Activated CD4-positive, alpha-beta memory T cell treated with anti-CD3 and anti-CD28 coated beads for 36 hours (primary cell): ENCODE measurements at regions of chr16 and their contacts with region 1.

Region 1: DNA sequence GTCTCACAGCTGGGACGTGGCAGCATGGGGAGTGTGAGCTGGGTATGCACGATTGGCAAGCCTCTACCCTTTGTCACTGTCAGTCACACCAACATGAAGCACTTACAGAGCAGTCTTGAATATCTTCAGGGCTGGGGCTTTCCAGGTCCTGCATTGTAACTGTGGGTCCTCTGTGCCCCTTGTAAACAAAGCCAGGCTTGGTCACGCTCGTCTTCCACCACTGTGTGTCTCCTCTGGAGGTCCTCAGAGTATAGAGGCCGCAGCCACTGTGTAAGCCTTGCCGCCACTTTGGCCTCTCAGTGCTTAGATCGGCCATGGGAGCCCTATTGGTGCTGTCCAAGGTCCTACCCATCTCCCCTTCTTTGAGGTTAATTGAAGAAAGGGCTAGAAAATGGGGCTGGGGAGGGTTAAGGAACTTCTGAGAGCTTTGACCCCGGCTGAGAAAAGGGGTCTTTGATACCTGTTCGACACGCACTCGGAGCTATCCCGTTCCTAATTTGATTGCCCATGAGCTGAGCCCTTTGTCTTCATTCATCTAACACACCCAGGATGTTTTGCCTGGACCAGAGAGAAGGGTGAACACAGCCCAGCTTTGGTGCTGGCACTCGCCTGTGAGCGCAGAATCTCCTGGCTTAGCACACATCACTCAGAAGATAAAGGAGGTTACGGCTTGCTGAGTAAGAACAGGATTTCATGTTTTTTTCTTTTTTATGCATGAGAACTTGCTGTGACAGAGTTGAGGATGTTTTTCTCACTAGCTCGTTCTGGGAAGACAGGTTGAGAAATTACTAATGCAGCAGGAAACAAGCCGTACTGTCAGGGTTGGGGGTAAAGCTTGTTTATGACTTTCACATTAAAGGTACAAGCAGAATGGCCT is 267.9 kb downstream of the CPPED1 start:
- DNase-seq: peak; percentile 81
- H3K4me3 Mint-ChIP-seq: peak overlapping the region; percentile 61
- H3K27ac Mint-ChIP-seq: peak overlapping the region; percentile 96
- H3K4me1 Mint-ChIP-seq: peaks cover 94% of the 10 kb centered on the region
- H3K27me3 Mint-ChIP-seq: no peaks in the 10 kb centered on the region

Region 2: GRCh38 chr16:12079412-12079965 is 456.3 kb before region 1 on chr16:
- CTCF ChIA-PET with region 1: no interaction called
- POLR2A ChIA-PET with region 1: no interaction called
- intact Hi-C with region 1: loop called (anchors 2 kb)
- DNase-seq: no peak
- H3K4me3 Mint-ChIP-seq: peak overlapping the region; percentile 32
- H3K27ac Mint-ChIP-seq: peak overlapping the region; percentile 94
- H3K4me1 Mint-ChIP-seq: peaks cover 65% of the 10 kb centered on the region
- H3K27me3 Mint-ChIP-seq: no peaks in the 10 kb centered on the region

Region 3: DNA sequence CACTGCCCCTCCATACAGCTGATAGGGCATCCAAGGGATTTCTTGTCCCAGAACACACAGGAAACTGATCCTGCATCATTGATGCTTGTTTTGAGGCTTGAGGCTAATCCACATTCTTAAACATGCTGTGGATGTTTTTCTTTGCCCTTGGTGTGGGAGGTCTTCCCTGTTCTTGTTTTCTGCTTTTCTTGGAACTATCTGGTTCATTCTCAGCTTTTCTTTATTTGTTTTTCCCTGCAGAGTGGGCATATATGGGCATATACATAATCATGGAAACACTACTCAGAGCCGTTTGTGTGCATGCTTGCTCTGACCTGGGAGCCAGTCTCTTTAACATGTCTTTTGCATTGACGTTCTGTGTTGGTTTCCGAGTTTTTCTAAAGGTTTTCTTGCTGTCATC is 259.2 kb before region 1 on chr16:
- CTCF ChIA-PET with region 1: no interaction called
- POLR2A ChIA-PET with region 1: no interaction called
- intact Hi-C with region 1: no loop called
- DNase-seq: no peak
- H3K4me3 Mint-ChIP-seq: no peak overlapping the region
- H3K27ac Mint-ChIP-seq: no peak overlapping the region
- H3K4me1 Mint-ChIP-seq: no peaks in the 10 kb centered on the region
- H3K27me3 Mint-ChIP-seq: no peaks in the 10 kb centered on the region

Region 4: DNA sequence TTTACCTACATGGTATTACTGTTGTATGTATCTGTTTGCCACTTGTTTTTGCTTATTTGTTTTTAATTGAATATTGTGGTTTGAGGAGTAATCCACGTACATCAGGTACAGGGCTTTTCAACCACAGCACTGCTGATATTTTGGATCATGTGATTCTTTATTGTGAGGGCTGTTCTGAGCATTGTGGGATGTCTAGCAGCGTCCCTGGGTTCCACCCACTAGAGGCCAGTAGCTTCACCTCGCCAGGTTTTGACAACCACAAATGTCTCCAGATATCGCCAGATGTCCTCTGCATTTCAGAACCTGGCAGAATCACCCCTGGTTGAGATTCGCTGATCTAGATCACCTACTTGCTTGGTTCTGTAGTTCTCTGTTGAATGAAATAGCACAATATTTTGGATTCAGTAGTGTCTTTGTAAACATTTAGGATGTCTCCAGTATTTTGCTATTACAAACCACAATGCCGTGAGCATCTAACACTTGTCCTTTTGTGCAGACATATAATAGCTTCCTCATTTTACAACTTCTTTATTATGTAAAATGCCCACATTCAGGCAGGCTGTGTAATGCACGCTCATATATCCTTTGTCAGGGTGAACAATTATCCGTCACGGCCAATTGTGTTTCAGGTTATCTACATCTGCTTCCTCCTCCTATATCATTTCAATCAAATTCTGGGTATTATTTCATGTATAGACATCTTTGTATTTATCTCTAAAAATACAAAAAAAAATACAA is 179.0 kb before region 1 on chr16:
- CTCF ChIA-PET with region 1: no interaction called
- POLR2A ChIA-PET with region 1: no interaction called
- intact Hi-C with region 1: no loop called
- DNase-seq: no peak
- H3K4me3 Mint-ChIP-seq: no peak overlapping the region
- H3K27ac Mint-ChIP-seq: no peak overlapping the region
- H3K4me1 Mint-ChIP-seq: no peaks in the 10 kb centered on the region
- H3K27me3 Mint-ChIP-seq: no peaks in the 10 kb centered on the region

Region 5: DNA sequence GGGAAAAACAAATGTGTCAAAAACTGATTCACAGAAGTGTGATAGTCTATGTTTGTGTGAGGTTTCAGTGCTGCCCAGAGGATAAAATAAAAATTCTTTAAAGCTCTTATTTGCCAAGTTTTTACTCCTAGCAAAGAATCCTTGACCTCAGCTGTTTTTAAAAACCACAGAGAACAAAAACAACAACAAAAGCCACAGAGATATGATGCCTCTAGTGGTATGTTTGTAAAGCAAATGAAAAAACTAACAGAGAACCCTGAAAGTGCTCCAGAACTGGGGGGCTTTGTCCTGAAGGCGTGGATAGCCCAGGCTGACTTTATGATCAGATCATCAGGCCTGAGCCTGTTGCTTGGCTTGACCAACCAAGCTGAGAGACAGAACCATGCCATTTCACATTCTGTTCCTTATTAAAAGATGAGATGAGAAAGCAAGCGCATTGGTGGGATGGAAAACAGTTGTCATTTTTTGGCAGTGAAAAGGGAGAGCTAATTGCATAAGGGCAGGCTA is 143.1 kb before region 1 on chr16:
- CTCF ChIA-PET with region 1: no interaction called
- POLR2A ChIA-PET with region 1: no interaction called
- intact Hi-C with region 1: no loop called
- DNase-seq: no peak
- H3K4me3 Mint-ChIP-seq: no peak overlapping the region
- H3K27ac Mint-ChIP-seq: no peak overlapping the region
- H3K4me1 Mint-ChIP-seq: no peaks in the 10 kb centered on the region
- H3K27me3 Mint-ChIP-seq: no peaks in the 10 kb centered on the region

Region 6: DNA sequence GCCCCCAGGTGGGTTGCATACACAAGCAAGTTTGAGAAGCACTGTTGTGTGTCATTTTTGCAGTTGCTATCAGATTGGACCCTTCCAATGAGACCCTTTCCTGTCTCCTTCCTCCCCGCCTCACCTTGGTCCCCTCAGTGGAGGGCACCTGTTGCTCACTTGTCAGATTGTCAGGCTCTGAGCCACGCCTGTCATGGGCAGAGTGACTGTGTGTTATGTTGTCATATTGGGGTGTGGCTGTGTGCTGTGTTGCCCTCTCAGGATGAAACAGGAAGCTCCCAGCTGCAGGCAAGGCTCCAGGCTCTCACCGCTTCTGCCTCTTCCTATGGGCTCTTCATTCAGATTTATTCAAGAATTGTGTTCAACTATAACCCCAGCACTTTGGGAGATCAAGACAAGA is 35.0 kb before region 1 on chr16:
- CTCF ChIA-PET with region 1: no interaction called
- POLR2A ChIA-PET with region 1: no interaction called
- intact Hi-C with region 1: loop called (anchors 5 kb)
- DNase-seq: peak; percentile 47
- H3K4me3 Mint-ChIP-seq: no peak overlapping the region
- H3K27ac Mint-ChIP-seq: no peak overlapping the region
- H3K4me1 Mint-ChIP-seq: no peaks in the 10 kb centered on the region
- H3K27me3 Mint-ChIP-seq: no peaks in the 10 kb centered on the region

Region 7: DNA sequence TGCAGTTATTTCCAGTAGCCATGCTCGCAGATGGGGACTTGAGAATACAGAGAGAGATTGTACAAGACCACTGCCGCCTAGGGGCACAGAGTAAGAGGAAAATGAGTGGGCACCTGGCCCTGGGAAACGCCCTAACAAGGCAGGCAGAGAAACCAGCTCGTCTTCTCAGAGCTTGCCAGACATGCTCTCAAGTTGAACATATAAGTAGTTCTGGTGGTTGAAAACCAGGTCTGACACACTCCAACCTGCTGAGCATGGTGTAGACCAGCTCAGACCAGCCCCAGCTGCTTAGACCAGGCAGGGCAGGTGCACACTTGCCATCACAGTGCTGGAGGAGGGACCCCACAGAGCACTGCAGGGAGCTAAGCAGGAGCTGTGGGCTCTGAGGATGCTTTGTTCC is 17.4 kb after region 1 on chr16:
- CTCF ChIA-PET with region 1: interaction called, 5 read pairs
- POLR2A ChIA-PET with region 1: interaction called, 15 read pairs
- intact Hi-C with region 1: loop called (anchors 1 kb)
- DNase-seq: no peak
- H3K4me3 Mint-ChIP-seq: no peak overlapping the region
- H3K27ac Mint-ChIP-seq: no peak overlapping the region
- H3K4me1 Mint-ChIP-seq: peaks cover 21% of the 10 kb centered on the region
- H3K27me3 Mint-ChIP-seq: no peaks in the 10 kb centered on the region

Region 8: GRCh38 chr16:12613131-12613991 is 77.6 kb after region 1 on chr16:
- CTCF ChIA-PET with region 1: interaction called, 5 read pairs
- POLR2A ChIA-PET with region 1: interaction called, 7 read pairs
- intact Hi-C with region 1: loop called (anchors 1 kb)
- DNase-seq: peak; percentile 75
- H3K4me3 Mint-ChIP-seq: no peak overlapping the region
- H3K27ac Mint-ChIP-seq: peak overlapping the region; percentile 67
- H3K4me1 Mint-ChIP-seq: peaks cover 38% of the 10 kb centered on the region
- H3K27me3 Mint-ChIP-seq: peaks cover 13% of the 10 kb centered on the region

Region 9: DNA sequence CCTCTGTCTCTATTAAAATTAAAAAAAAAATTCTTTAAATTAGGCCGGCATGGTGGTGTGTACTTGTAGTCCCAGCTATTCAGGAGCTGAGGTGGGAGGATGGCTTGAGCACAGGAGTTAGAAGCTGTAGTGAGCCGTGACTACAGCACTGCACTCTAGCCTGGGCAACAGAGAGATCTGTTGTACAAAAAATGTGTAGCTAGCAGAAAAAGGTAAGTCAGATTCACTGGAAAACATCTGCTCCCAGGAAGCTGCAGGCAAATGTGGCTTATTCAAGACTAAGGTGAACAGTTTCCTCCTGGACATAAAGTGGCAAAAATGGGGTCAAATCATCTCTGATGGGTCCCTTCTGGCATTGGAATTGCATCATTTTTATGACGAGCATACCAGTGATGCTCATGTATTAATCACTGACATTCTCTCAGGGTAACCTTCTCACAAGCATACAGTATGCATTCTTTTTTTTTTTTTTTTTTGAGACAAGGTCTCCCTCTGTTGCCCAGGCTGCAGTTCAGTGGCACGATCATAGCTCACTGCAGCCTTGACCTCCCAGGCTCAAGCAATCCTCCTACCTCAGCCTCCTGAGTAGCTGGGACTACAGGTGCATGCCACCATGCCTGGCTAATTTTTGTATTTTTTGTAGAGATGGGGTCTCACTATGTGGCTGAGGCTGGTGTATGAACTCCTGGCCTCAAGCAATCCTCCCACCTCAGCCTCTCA is 219.2 kb after region 1 on chr16:
- CTCF ChIA-PET with region 1: interaction called, 3 read pairs
- POLR2A ChIA-PET with region 1: interaction called, 19 read pairs
- intact Hi-C with region 1: loop called (anchors 1 kb)
- DNase-seq: no peak
- H3K4me3 Mint-ChIP-seq: no peak overlapping the region
- H3K27ac Mint-ChIP-seq: no peak overlapping the region
- H3K4me1 Mint-ChIP-seq: peaks cover 33% of the 10 kb centered on the region
- H3K27me3 Mint-ChIP-seq: no peaks in the 10 kb centered on the region